HepG2 (cell line): ENCODE measurements at regions of chr7 and their contacts with region 1.

Region 1: DNA sequence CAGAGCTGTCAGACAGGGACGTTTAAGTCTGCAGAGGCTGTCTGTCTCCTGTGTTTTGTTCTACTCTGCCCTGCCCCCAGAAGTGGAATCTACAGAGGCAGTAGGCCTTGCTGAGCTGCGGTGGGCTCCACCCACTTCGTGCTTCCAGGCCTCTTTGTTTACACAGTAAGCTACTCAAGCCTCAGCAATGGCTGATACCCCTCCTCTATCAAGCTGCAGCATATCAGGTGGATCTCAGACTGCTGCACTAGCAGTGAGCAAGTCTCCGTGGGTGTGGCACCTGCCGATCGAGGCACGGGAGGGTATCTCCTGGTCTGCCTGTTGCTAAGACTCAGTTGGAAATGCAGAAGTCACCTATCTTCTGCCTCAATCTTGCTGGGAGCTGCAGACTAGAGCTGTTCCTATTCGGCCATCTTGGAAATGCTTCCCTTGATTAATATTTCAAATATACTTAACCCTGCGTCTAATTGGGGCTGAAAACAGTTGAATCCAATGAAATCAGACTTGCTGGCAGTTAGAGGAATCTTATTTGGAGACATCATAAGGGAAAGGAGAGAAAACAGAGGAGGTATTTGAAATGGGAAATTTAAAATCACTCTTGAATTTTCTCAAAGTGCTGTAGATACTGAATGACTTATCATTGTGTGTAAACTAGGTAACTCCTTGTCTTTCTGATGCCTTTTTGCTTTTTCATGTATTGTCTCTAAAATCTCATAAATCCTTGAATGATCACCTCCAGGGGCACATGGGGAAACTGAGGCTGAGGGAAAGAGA is 13.8 kb upstream of the CYP3A5 start:
- DNase-seq: peak; percentile 97
- ATAC-seq: peak; percentile 92
- H3K4me3 ChIP-seq: peak overlapping the region; percentile 38 to 65 (median 38)
- H3K27ac ChIP-seq: peak overlapping the region; percentile 97
- H3K4me1 ChIP-seq: peaks cover 72% of the 10 kb centered on the region
- H3K27me3 ChIP-seq: no peaks in the 10 kb centered on the region
- CTCF ChIP-seq: no peak; the same call in 1 of the 2 replicates
- EP300 ChIP-seq: peak in 1 of 2 experiments; percentile 57; a peak in 1 of 4 replicates
- POLR2A ChIP-seq: peak; percentile 72 to 84
- RAD21 ChIP-seq: peak; percentile 50; the same call in 1 of the 2 replicates

Region 2: GRCh38 chr7:99571768-99572167 is 121.8 kb before region 1 on chr7:
- CTCF ChIA-PET with region 1: no interaction called
- POLR2A ChIA-PET with region 1: no interaction called
- in situ Hi-C with region 1: no loop called
- intact Hi-C with region 1: no loop called
- DNase-seq: no peak
- ATAC-seq: no peak
- H3K4me3 ChIP-seq: no peak overlapping the region
- H3K27ac ChIP-seq: no peak overlapping the region
- H3K4me1 ChIP-seq: no peaks in the 10 kb centered on the region
- H3K27me3 ChIP-seq: no peaks in the 10 kb centered on the region
- CTCF ChIP-seq: no peak
- EP300 ChIP-seq: no peak
- POLR2A ChIP-seq: no peak
- RAD21 ChIP-seq: no peak

Region 3: GRCh38 chr7:99616359-99617191 is 77.0 kb before region 1 on chr7 and contains the start of gene ZSCAN25:
- CTCF ChIA-PET with region 1: no interaction called
- POLR2A ChIA-PET with region 1: interaction called, 23 read pairs
- in situ Hi-C with region 1: no loop called
- intact Hi-C with region 1: no loop called
- DNase-seq: peak; percentile 91
- ATAC-seq: peak; percentile 96
- H3K4me3 ChIP-seq: peak within 1 kb of the TSS; percentile 93 to 98 (median 96)
- H3K27ac ChIP-seq: peak within 1 kb of the TSS; percentile 96
- H3K4me1 ChIP-seq: peaks cover 25% of the 10 kb centered on the region
- H3K27me3 ChIP-seq: no peaks in the 10 kb centered on the region; a peak in 1 of 5 replicates
- CTCF ChIP-seq: peak; percentile 97
- EP300 ChIP-seq: no peak
- POLR2A ChIP-seq: peak; percentile 82 to 83
- RAD21 ChIP-seq: peak; percentile 71
- total RNA-seq, gene ZSCAN25: 16.3 and 16.8 TPM in 2 replicates

Region 4: DNA sequence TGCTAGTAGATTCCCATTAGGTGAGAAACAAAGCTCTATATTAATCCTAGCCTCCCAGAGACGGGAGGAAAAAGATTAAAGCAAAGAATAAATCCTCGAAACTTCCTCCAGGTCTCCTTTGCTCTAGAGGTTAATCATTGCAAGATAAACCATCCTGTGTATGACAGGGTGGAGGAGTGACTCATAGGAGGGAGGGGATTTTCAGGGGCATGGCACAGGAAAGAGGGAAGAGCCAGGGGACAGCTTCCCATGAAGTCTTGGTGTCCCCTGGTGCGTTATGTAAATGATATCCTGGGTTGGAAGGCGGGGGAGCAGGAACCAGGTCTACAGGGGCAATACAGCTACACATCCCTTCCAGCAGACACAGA is 14.6 kb before region 1 on chr7:
- CTCF ChIA-PET with region 1: no interaction called
- POLR2A ChIA-PET with region 1: interaction called, 119 read pairs
- in situ Hi-C with region 1: no loop called
- intact Hi-C with region 1: no loop called
- DNase-seq: peak; percentile 83
- ATAC-seq: peak; percentile 90
- H3K4me3 ChIP-seq: no peak overlapping the region
- H3K27ac ChIP-seq: peak overlapping the region; percentile 0
- H3K4me1 ChIP-seq: peaks cover 51% of the 10 kb centered on the region
- H3K27me3 ChIP-seq: no peaks in the 10 kb centered on the region
- CTCF ChIP-seq: no peak
- EP300 ChIP-seq: peak in 1 of 2 experiments; percentile 73; a peak in 2 of 4 replicates
- POLR2A ChIP-seq: no peak
- RAD21 ChIP-seq: no peak

Region 5: GRCh38 chr7:99733448-99733847 is 39.8 kb after region 1 on chr7:
- CTCF ChIA-PET with region 1: no interaction called
- POLR2A ChIA-PET with region 1: interaction called, 26 read pairs
- in situ Hi-C with region 1: no loop called
- intact Hi-C with region 1: loop called (anchors 1 kb)
- DNase-seq: peak; percentile 42
- ATAC-seq: peak; percentile 49
- H3K4me3 ChIP-seq: no peak overlapping the region
- H3K27ac ChIP-seq: peak overlapping the region; percentile 50
- H3K4me1 ChIP-seq: peaks cover 81% of the 10 kb centered on the region
- H3K27me3 ChIP-seq: no peaks in the 10 kb centered on the region
- CTCF ChIP-seq: peak; percentile 63
- EP300 ChIP-seq: no peak
- POLR2A ChIP-seq: no peak
- RAD21 ChIP-seq: no peak

Region 6: DNA sequence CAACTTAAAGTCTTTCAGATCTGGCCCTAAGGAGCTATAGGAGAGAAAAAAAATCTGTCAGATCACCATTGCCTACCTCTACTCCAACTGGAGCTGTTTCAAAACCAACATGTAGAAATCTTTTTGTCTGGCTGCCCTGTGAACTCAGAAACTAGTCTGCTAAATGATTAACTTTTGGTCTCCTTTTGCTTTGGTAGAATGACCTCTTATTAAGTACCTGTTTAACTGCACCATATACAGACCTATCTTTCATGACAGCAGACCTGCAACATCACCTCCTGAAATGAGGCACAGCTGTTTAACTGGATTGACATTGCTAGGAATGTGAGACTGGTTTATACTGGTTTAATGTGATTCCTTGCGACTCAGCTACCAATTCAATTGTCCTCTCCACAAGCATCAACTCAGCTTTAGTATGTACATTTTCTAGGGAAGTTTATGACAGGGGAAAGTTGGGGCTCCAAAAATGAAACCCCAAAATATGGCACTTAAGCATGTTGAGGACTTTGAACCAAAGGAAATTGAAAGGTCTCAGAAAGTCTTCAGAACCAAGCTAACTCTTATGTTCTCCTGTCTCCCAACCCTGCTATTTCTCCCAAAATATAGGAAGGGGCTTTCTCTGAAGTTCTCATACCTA is 136.0 kb after region 1 on chr7:
- CTCF ChIA-PET with region 1: no interaction called
- POLR2A ChIA-PET with region 1: interaction called, 38 read pairs
- in situ Hi-C with region 1: no loop called
- intact Hi-C with region 1: no loop called
- DNase-seq: peak; percentile 96
- ATAC-seq: peak; percentile 85
- H3K4me3 ChIP-seq: peak overlapping the region; percentile 17 to 50 (median 46); a peak in 4 of 6 replicates
- H3K27ac ChIP-seq: peak overlapping the region; percentile 82
- H3K4me1 ChIP-seq: peaks cover 97% of the 10 kb centered on the region
- H3K27me3 ChIP-seq: no peaks in the 10 kb centered on the region
- CTCF ChIP-seq: no peak
- EP300 ChIP-seq: peak in 1 of 2 experiments; percentile 73; a peak in 2 of 4 replicates
- POLR2A ChIP-seq: peak in 1 of 2 experiments; percentile 34; a peak in 1 of 4 replicates
- RAD21 ChIP-seq: no peak